Naive thymus-derived CD8-positive, alpha-beta T cell (primary cell): ENCODE measurements at regions of chr5 and their contacts with region 1.

Region 1: GRCh38 chr5:132410451-132411381 is 41.2 kb downstream of the SLC22A5 start:
- DNase-seq: peak; percentile 72 to 90 (median 83)
- ATAC-seq: peak; percentile 78 to 79
- H3K4me3 Mint-ChIP-seq: peak overlapping the region; percentile 88 to 99 (median 98)
- H3K27ac Mint-ChIP-seq: peak overlapping the region; percentile 95 to 99 (median 98)
- H3K4me1 Mint-ChIP-seq: peaks cover 36 to 91% (median 79%) of the 10 kb centered on the region in 4 donors
- H3K27me3 Mint-ChIP-seq: no peaks in the 10 kb centered on the region

Region 2: DNA sequence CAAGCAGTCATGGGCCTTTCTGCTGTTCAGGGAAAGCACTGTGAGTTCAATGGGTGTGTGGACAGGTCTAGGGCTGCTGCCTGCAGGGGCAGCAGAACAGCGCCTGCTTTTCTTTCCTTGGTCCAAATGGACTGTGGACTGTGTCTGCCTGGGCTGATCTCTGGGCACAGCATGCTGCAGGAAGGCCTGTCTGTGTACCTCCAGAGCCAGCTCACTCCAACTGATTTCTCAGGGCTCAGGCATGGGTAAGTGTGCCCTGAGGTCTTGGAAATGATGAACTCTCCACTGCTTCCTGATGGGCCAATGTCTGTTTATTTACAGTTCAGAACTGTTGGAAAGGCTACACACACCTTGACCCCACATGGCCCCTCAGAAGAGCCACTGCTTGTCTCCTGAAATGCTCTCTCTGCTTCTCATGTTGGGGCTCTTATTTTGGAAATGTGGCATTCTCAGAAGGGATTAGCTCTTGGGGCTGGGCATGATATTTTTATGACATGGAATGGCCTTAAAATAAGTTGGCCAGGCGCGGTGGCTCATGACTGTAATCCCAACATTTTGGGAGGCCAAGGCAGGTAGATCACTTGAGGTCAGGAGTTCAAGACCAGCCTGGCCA is 89.5 kb before region 1 on chr5:
- POLR2A ChIA-PET with region 1: no interaction called
- DNase-seq: no peak
- ATAC-seq: no peak
- H3K4me3 Mint-ChIP-seq: no peak overlapping the region
- H3K27ac Mint-ChIP-seq: no peak overlapping the region
- H3K4me1 Mint-ChIP-seq: peaks cover 0 to 2% (median 0%) of the 10 kb centered on the region in 4 donors
- H3K27me3 Mint-ChIP-seq: no peaks in the 10 kb centered on the region

Region 3: DNA sequence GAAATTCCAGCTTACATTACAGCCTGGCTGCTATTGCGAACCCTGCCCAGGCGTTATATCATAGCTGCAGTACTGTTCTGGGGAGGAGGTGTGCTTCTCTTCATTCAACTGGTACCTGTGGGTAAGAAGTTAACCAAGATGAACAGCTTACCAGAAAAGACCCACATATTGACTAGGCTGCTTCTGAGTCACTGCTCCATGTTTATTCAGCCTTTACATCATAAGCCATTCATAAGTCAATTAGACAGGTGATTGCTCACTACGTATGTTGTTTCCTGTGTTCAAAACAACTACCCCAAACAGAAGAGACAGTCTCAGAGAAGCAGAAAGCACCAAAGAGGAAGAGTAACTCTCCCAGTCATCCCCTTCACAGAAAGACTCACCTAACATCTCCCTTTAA is 75.9 kb before region 1 on chr5:
- POLR2A ChIA-PET with region 1: no interaction called
- DNase-seq: peak in 1 of 10 donors; percentile 1
- ATAC-seq: peak; percentile 57 to 61
- H3K4me3 Mint-ChIP-seq: no peak overlapping the region
- H3K27ac Mint-ChIP-seq: peak overlapping the region in 1 of 10 donors; percentile 63
- H3K4me1 Mint-ChIP-seq: peaks cover 0 to 6% (median 0%) of the 10 kb centered on the region in 4 donors
- H3K27me3 Mint-ChIP-seq: no peaks in the 10 kb centered on the region

Region 4: DNA sequence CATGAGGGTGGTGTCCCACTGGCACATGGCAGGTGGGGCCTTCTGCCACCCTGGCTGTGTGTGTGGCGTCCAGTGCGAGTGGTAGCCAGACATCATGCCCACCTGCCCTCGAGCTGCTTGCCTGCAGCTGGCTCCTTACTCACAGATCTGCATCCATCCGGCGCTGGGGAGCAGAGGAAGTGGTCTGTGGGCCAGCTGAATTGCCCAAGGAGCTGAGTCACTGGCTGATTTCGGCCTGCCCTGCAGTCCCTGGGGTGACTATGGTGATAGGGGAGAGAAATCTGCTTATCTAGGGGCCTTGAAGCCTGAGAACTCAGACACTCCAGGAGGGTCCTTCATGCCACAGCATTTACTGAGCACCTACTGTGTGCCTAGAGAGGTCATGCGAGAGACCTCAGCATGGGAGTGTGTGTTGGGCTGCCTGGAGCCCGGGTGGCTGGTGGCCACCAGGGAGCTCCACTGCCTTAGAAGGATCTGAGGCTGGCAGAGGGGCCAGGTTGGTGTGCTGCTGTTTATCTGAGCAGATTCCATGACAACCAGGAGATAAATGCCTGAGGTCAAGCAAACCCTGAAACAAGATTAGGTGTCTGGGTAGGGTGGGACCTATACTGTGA is 15.9 kb after region 1 on chr5:
- POLR2A ChIA-PET with region 1: interaction called, 62 read pairs
- DNase-seq: peak in 5 of 10 donors; percentile 31 to 59 (median 36)
- ATAC-seq: peak; percentile 31 to 40
- H3K4me3 Mint-ChIP-seq: peak overlapping the region; percentile 62 to 90 (median 84)
- H3K27ac Mint-ChIP-seq: peak overlapping the region; percentile 95 to 100 (median 98)
- H3K4me1 Mint-ChIP-seq: peaks cover 51 to 100% (median 98%) of the 10 kb centered on the region in 4 donors
- H3K27me3 Mint-ChIP-seq: no peaks in the 10 kb centered on the region

Region 5: DNA sequence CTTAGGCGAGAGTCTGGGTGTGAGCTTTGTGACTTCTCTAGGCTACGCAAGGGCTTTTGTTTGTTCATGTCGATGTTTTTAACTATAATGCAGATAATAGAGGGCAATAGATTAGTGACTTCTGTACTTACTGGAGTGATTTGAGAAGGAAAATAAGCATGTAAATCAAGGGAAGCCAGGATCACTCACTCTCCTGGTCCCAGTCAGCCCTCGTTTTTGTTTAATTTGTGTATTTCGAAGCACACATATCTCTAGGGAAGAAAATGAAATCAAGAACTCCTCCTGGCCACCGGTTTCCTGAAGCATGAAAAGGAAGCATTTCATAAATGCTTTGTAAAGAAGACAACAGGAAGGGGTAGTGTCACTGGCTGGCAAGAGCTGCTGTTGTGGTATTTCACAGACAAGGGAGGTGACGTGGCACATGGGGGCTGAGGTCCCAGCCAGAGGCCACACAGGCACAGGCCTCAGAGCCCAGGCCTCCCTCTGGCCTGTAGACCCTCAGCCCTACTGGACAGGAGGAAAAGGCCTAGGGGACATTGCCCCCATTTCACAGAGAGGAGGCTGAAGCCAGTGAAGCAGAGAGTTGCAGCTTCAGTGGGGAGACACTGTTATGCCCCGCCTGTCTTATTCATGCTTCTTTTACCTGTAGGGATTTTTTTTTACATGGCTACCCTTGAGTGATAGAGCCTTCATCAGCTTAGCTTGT is 45.7 kb after region 1 on chr5:
- POLR2A ChIA-PET with region 1: interaction called, 52 read pairs
- DNase-seq: peak in 8 of 10 donors; percentile 61 to 82 (median 74)
- ATAC-seq: peak; percentile 71 to 79
- H3K4me3 Mint-ChIP-seq: peak overlapping the region; percentile 59 to 85 (median 75)
- H3K27ac Mint-ChIP-seq: peak overlapping the region; percentile 95 to 100 (median 98)
- H3K4me1 Mint-ChIP-seq: peaks cover 53 to 99% (median 92%) of the 10 kb centered on the region in 4 donors
- H3K27me3 Mint-ChIP-seq: no peaks in the 10 kb centered on the region

Region 6: GRCh38 chr5:132473019-132473531 is 62.4 kb after region 1 on chr5:
- POLR2A ChIA-PET with region 1: interaction called, 43 read pairs
- DNase-seq: peak; percentile 58 to 95 (median 86)
- ATAC-seq: peak; percentile 68 to 92
- H3K4me3 Mint-ChIP-seq: peak overlapping the region; percentile 17 to 88 (median 46)
- H3K27ac Mint-ChIP-seq: peak overlapping the region; percentile 93 to 98 (median 94)
- H3K4me1 Mint-ChIP-seq: peaks cover 42 to 96% (median 92%) of the 10 kb centered on the region in 4 donors
- H3K27me3 Mint-ChIP-seq: no peaks in the 10 kb centered on the region

Region 7: GRCh38 chr5:132500931-132501630 is 90.4 kb after region 1 on chr5:
- POLR2A ChIA-PET with region 1: interaction called, 99 read pairs
- DNase-seq: peak; percentile 55 to 91 (median 76)
- ATAC-seq: peak; percentile 37 to 46
- H3K4me3 Mint-ChIP-seq: no peak overlapping the region
- H3K27ac Mint-ChIP-seq: peak overlapping the region; percentile 48 to 99 (median 65)
- H3K4me1 Mint-ChIP-seq: peaks cover 11 to 45% (median 39%) of the 10 kb centered on the region in 4 donors
- H3K27me3 Mint-ChIP-seq: peaks cover 0 to 1% (median 0%) of the 10 kb centered on the region in 5 donors